Left cardiac atrium (tissue), 4 donors: ENCODE measurements at regions of chr16 and their contacts with region 1.

Region 1: GRCh38 chr16:15899538-15900100 is 11.2 kb upstream of the CEP20 start:
- DNase-seq: no peak
- ATAC-seq: peak; percentile 50 to 95

Region 2: DNA sequence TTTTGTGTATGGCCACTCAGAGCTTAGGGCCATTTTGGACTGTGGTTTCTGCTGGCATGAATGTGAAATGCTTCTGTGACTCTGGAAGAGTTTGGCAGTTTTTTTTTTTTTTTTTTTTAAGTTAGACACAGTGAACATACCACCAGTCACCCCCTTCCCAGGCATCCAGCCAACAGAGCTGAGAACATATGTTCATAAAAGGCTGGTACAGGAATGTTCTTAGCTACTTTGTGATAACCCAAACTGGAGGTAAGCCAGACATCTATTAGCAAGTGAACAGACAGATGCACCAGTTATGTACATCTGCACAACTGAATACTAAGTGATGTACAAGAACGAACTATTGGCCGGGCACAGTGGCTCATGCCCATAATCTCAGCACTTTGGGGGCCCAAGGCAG is 142.5 kb after region 1 on chr16:
- intact Hi-C with region 1: loop called in 1 of 2 experiments (anchors 10 kb)
- DNase-seq: peak; percentile 65
- ATAC-seq: peak; percentile 79 to 86

Region 3: DNA sequence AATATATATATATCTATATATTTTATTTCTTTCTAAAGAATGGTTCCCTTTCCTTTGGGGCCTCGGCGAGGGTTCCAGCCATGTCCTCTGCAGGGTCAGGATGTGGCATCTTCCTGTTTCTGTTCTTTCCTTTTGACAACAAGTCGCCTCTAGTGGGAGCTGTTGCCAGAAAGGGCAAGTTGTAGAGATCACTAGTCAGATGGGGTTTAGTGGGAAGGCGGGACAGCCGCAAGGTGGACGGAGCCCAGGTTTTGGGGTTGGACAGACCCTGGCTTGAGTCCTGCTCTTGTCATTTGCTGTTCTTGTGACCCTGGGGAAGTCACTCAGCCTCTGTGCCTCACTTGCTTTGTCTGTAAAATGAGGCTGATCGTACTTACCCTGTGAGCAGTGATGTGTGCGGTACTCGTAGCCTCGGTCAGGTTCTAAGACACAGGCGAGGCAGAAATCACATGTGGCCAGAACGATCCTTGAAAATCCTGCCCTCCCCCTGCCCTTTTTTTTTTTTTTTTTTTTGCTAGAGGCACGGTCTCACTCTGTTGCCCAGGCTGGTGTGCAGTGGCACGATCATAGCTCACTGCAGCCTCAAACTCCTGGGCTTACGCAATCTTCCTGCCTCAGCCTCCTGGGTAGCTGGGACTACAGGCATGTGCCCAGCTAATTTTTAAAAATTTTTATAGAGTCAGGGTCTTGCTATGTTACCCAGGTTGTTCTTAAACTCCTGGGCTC is 243.6 kb after region 1 on chr16:
- intact Hi-C with region 1: no loop called
- DNase-seq: no peak
- ATAC-seq: no peak